ENCODE measurements at regions of chr2 and their contacts with region 1.

Region 1: DNA sequence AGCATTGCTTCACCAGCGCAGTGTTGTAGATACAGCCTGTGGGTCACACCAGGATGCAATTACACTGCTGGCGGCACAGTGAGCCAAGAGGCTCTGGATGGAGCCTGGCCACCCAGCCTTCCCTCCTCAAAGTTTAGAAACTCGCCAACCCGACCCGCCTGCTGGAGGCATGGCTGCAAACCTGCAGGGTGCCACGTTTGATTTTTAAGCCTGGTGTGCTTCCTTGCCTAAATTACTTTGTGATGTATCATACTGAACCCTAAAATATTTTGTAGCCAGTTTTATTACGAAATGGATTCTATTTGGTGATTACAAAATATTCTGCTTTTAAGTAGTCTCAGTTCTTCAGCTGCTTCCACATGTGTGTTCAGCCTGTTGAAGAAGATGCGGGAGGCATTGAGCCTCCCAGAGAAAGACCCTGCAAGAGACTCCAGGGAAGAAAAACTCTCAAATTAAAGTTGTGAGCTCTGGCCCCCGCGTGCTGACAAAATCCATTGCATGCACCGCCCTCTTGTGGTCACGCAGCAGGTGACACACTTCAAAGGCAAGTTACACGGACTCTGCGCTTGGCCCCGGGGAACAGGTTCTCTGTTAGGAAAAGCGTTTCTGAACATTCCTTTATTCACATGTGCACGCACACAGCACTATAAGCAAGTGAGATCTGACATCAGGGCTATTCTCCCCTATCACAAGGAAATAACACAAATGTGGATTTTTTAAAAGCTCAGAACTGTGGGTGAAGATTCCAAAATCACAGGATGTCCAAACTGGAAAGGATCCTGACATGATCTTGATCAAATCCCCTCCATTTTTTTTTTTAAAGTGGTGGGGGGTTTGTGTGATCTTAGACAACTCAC is 63.0 kb upstream of the TWIST2 start:
- DNase-seq: peak; percentile 62 to 75
- H3K4me3 ChIP-seq: no peak overlapping the region
- H3K27ac ChIP-seq: no peak overlapping the region
- H3K4me1 ChIP-seq: no peaks in the 10 kb centered on the region
- H3K27me3 ChIP-seq: no peaks in the 10 kb centered on the region
- CTCF ChIP-seq: peak; percentile 49 to 90 (median 81)
- POLR2A ChIP-seq: no peak

Region 2: DNA sequence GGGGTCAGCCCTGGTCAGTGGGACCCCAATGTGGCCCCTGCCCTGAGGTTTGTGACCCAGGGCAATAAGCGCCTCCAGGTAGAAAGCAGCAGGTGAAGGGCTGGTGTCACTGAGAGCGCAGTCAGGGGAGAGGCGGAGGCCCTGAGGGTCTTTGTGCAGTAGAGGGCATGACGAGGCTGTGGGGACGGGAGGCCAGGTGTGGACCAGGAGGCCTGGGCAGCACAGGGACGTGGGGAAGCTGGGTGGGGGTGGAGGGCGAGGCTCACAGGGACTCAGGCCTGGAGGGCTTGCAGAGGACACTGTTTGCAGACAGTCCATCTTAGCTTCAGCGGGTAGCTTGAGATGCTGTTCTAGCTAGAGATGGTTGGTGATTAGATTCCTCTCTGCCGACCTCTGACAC is 432.5 kb before region 1 on chr2:
- intact Hi-C with region 1: loop called (anchors 10 kb)
- DNase-seq: no peak
- H3K4me3 ChIP-seq: no peak overlapping the region
- H3K27ac ChIP-seq: no peak overlapping the region
- H3K4me1 ChIP-seq: no peaks in the 10 kb centered on the region
- H3K27me3 ChIP-seq: no peaks in the 10 kb centered on the region
- CTCF ChIP-seq: no peak
- POLR2A ChIP-seq: no peak

Region 3: GRCh38 chr2:238510911-238511613 is 273.8 kb before region 1 on chr2:
- intact Hi-C with region 1: loop called (anchors 2 kb)
- DNase-seq: no peak
- H3K4me3 ChIP-seq: no peak overlapping the region
- H3K27ac ChIP-seq: no peak overlapping the region
- H3K4me1 ChIP-seq: no peaks in the 10 kb centered on the region
- H3K27me3 ChIP-seq: no peaks in the 10 kb centered on the region
- CTCF ChIP-seq: no peak
- POLR2A ChIP-seq: no peak

Region 4: DNA sequence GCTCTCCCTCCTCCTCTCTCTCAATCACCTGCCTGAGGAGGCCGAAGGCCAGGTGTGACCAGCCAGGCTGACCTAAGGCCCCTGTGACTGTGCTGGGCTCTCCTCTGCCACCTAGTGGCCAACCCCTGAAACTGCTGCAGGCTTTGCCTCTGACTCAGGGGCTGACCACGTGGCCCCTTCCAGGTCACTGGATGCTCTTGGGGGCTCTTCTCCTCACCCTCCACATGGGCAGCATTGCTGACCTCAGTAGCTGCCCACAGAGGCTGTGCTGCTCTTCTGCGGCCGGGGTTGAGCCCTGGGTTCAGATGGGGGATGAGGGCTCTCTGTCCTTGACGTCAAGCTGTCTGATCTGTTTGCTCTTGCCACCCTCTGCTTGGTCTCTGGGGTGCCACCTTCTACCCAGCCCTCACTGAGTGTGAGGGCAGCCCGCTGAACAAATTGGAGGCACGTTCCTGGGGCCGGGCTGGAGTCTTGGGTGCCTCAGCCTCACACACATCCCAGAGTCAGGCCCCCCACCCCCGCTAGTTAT is 185.7 kb after region 1 on chr2:
- intact Hi-C with region 1: no loop called
- DNase-seq: peak; percentile 36 to 57
- H3K4me3 ChIP-seq: no peak overlapping the region
- H3K27ac ChIP-seq: no peak overlapping the region
- H3K4me1 ChIP-seq: peaks cover 0 to 4% of the 10 kb centered on the region in 2 donors
- H3K27me3 ChIP-seq: no peaks in the 10 kb centered on the region
- CTCF ChIP-seq: peak; percentile 79 to 100 (median 92)
- POLR2A ChIP-seq: no peak